B cell (primary cell): ENCODE measurements at regions of chr14 and their contacts with region 1.

Region 1: DNA sequence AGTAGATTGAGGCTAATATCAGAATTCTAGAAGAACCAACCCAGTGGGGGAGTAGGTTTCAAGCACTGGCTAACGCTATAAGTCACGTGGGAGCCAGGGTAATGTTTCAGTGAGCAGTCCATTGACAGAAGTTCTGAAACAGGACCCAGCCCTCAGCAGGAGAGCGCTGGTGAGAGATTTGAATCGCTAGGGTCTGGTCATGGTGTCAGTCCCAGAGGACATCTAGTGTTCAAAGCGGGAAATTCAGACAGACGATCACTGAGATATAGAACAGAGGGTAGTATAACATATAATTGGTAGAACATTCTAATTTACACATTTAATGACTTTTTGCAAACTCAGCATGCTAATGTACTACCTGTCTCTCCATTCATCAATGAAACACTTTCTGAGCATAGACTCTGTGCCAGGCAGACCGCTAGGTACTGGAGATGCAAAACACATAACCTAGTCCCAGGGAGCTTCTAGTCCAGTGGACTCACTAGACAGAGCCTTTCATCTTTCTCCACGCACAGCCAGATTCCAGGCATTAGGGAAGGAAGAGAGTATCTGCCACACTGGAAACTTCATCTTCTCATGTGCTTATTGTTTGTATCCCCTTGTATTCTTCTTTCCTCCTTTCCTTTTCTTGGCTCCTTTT is 35.4 kb upstream of the RNASE3 start:
- DNase-seq: peak; percentile 84
- ATAC-seq: peak; percentile 99
- H3K4me3 ChIP-seq: no peak overlapping the region
- H3K4me3 Mint-ChIP-seq: no peak overlapping the region
- H3K27ac ChIP-seq: no peak overlapping the region
- H3K27ac Mint-ChIP-seq: no peak overlapping the region
- H3K4me1 ChIP-seq: peaks cover 3 to 7% of the 10 kb centered on the region in 2 donors
- H3K4me1 Mint-ChIP-seq: peaks cover 11% of the 10 kb centered on the region
- H3K27me3 ChIP-seq: peaks cover 0 to 18% (median 12%) of the 10 kb centered on the region in 4 experiments
- H3K27me3 Mint-ChIP-seq: peaks cover 30% of the 10 kb centered on the region
- CTCF ChIP-seq: peak; percentile 86

Region 2: DNA sequence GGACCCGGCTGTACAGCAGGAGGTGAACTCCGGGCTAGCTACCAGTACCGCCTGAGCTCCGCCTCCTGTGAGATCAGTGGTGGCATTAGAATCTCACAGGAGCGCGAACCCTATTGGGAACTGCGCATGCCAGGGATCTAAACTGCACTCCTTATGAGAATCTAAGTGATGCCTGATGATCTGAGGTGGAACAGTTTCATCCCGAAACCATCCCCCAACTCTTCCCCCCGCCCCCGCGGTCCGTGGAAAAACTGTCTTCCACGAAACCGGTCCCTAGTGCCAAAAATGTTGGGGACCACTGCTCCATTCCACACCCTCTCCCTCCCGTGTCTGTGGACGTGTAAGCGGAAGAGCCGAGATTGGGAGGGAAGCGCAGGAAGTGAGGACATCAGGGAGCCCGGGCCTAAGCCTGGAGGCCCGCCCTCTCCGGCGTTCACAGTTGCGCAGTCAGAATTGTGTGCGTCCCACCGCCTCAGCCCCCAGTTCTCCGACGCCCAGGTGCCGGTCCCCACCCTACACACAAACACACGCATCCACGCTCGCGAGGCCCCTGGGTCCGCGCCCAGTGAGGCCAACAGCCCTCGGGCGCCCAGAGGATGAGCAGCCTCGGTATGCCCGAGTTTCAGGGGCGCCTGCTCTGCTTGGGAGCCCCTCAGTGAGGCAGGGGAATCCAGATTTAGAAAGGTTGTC is 173.2 kb before region 1 on chr14:
- CTCF ChIA-PET with region 1: interaction called, 10 read pairs
- POLR2A ChIA-PET with region 1: no interaction called
- intact Hi-C with region 1: no loop called
- DNase-seq: peak; percentile 88
- ATAC-seq: peak; percentile 57
- H3K4me3 ChIP-seq: peak overlapping the region; percentile 81 to 95 (median 92)
- H3K4me3 Mint-ChIP-seq: no peak overlapping the region
- H3K27ac ChIP-seq: peak overlapping the region; percentile 92 to 94
- H3K27ac Mint-ChIP-seq: no peak overlapping the region
- H3K4me1 ChIP-seq: peaks cover 31 to 48% of the 10 kb centered on the region in 2 donors
- H3K4me1 Mint-ChIP-seq: peaks cover 15% of the 10 kb centered on the region
- H3K27me3 ChIP-seq: no peaks in the 10 kb centered on the region
- H3K27me3 Mint-ChIP-seq: no peaks in the 10 kb centered on the region
- CTCF ChIP-seq: no peak

Region 3: GRCh38 chr14:20707622-20708021 is 148.2 kb before region 1 on chr14:
- CTCF ChIA-PET with region 1: interaction called, 15 read pairs
- POLR2A ChIA-PET with region 1: no interaction called
- intact Hi-C with region 1: no loop called
- DNase-seq: no peak
- ATAC-seq: no peak
- H3K4me3 ChIP-seq: no peak overlapping the region
- H3K4me3 Mint-ChIP-seq: no peak overlapping the region
- H3K27ac ChIP-seq: no peak overlapping the region
- H3K27ac Mint-ChIP-seq: no peak overlapping the region
- H3K4me1 ChIP-seq: no peaks in the 10 kb centered on the region
- H3K4me1 Mint-ChIP-seq: peaks cover 3% of the 10 kb centered on the region
- H3K27me3 ChIP-seq: no peaks in the 10 kb centered on the region
- H3K27me3 Mint-ChIP-seq: no peaks in the 10 kb centered on the region
- CTCF ChIP-seq: no peak

Region 4: GRCh38 chr14:20782280-20782890 is 73.4 kb before region 1 on chr14:
- CTCF ChIA-PET with region 1: interaction called, 13 read pairs
- POLR2A ChIA-PET with region 1: no interaction called
- intact Hi-C with region 1: loop called (anchors 1 kb)
- DNase-seq: peak; percentile 59
- ATAC-seq: peak; percentile 46
- H3K4me3 ChIP-seq: peak overlapping the region; percentile 65 to 90 (median 80)
- H3K4me3 Mint-ChIP-seq: peak overlapping the region; percentile 97
- H3K27ac ChIP-seq: peak overlapping the region; percentile 76 to 84
- H3K27ac Mint-ChIP-seq: peak overlapping the region; percentile 92
- H3K4me1 ChIP-seq: peaks cover 39 to 43% of the 10 kb centered on the region in 2 donors
- H3K4me1 Mint-ChIP-seq: peaks cover 53% of the 10 kb centered on the region
- H3K27me3 ChIP-seq: no peaks in the 10 kb centered on the region
- H3K27me3 Mint-ChIP-seq: no peaks in the 10 kb centered on the region
- CTCF ChIP-seq: no peak

Region 5: GRCh38 chr14:20873370-20874177 is 17.8 kb after region 1 on chr14:
- CTCF ChIA-PET with region 1: interaction called, 32 read pairs
- POLR2A ChIA-PET with region 1: no interaction called
- intact Hi-C with region 1: loop called (anchors 1 kb)
- DNase-seq: peak; percentile 77
- ATAC-seq: peak; percentile 56
- H3K4me3 ChIP-seq: peak overlapping the region in 1 of 5 experiments; percentile 26
- H3K4me3 Mint-ChIP-seq: peak overlapping the region; percentile 54
- H3K27ac ChIP-seq: no peak overlapping the region
- H3K27ac Mint-ChIP-seq: no peak overlapping the region
- H3K4me1 ChIP-seq: peaks cover 6 to 9% of the 10 kb centered on the region in 2 donors
- H3K4me1 Mint-ChIP-seq: peaks cover 13% of the 10 kb centered on the region
- H3K27me3 ChIP-seq: peaks cover 0 to 17% (median 2%) of the 10 kb centered on the region in 4 experiments
- H3K27me3 Mint-ChIP-seq: peaks cover 37% of the 10 kb centered on the region
- CTCF ChIP-seq: peak; percentile 82

Region 6: GRCh38 chr14:20922474-20922873 is 66.7 kb after region 1 on chr14:
- CTCF ChIA-PET with region 1: no interaction called
- POLR2A ChIA-PET with region 1: no interaction called
- intact Hi-C with region 1: no loop called
- DNase-seq: no peak
- ATAC-seq: no peak
- H3K4me3 ChIP-seq: no peak overlapping the region
- H3K4me3 Mint-ChIP-seq: no peak overlapping the region
- H3K27ac ChIP-seq: no peak overlapping the region
- H3K27ac Mint-ChIP-seq: no peak overlapping the region
- H3K4me1 ChIP-seq: no peaks in the 10 kb centered on the region
- H3K4me1 Mint-ChIP-seq: no peaks in the 10 kb centered on the region
- H3K27me3 ChIP-seq: peaks cover 0 to 14% (median 7%) of the 10 kb centered on the region in 4 experiments
- H3K27me3 Mint-ChIP-seq: peaks cover 44% of the 10 kb centered on the region
- CTCF ChIP-seq: no peak